ENCODE measurements at regions of chr6 and their contacts with region 1.

Region 1: GRCh38 chr6:112043032-112044007 is 10.6 kb upstream of the CCN6 start:
- DNase-seq: peak; percentile 80 to 93 (median 88)
- H3K4me3 ChIP-seq: peak overlapping the region; percentile 45
- H3K27ac ChIP-seq: peak overlapping the region; percentile 51 to 68
- H3K4me1 ChIP-seq: no peaks in the 10 kb centered on the region
- H3K27me3 ChIP-seq: no peaks in the 10 kb centered on the region
- CTCF ChIP-seq: peak; percentile 86 to 95 (median 88)
- EP300 ChIP-seq: no peak
- POLR2A ChIP-seq: no peak

Region 2: DNA sequence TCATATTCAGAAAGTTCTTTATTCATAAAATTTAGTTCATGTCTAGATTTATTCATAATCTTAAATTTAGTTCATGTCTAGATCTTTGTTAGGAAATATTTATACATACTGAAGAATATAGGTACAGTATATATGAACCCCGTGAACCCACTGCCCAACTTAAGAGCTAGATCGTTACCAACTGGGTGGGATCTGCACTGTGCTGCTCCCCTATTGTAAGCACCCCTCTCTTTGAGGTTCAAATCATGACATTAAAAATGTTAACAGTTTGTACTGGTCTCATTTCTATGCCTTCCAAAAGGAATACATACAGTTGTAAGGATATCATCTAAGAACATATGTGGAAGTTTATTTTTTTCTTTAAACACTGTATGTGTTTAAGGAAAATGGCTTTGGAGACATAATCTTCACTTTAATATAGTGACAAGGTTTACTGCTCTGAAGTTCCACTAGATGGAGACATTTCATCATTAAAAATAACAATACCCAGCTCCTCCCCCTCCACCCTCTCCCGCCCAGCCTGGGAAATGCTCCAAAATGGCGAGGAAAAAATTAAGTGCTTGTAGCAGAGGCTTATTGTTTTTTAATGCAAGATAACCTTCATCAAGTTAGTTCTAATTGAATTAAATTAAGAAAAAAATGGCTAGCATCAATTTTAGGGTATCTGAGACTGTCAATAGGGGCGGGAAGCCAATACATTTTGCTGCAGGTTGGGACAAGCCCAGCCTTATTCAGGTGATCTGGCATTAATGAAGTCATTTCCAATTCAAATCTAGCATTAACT is 333.5 kb before region 1 on chr6:
- intact Hi-C with region 1: loop called (anchors 2 to 10 kb)
- DNase-seq: peak; percentile 69 to 85 (median 76)
- H3K4me3 ChIP-seq: no peak overlapping the region
- H3K27ac ChIP-seq: peak overlapping the region in 1 of 2 donors; percentile 60
- H3K4me1 ChIP-seq: peaks cover 10% of the 10 kb centered on the region
- H3K27me3 ChIP-seq: no peaks in the 10 kb centered on the region
- CTCF ChIP-seq: peak; percentile 51 to 90 (median 69)
- EP300 ChIP-seq: no peak
- POLR2A ChIP-seq: no peak

Region 3: DNA sequence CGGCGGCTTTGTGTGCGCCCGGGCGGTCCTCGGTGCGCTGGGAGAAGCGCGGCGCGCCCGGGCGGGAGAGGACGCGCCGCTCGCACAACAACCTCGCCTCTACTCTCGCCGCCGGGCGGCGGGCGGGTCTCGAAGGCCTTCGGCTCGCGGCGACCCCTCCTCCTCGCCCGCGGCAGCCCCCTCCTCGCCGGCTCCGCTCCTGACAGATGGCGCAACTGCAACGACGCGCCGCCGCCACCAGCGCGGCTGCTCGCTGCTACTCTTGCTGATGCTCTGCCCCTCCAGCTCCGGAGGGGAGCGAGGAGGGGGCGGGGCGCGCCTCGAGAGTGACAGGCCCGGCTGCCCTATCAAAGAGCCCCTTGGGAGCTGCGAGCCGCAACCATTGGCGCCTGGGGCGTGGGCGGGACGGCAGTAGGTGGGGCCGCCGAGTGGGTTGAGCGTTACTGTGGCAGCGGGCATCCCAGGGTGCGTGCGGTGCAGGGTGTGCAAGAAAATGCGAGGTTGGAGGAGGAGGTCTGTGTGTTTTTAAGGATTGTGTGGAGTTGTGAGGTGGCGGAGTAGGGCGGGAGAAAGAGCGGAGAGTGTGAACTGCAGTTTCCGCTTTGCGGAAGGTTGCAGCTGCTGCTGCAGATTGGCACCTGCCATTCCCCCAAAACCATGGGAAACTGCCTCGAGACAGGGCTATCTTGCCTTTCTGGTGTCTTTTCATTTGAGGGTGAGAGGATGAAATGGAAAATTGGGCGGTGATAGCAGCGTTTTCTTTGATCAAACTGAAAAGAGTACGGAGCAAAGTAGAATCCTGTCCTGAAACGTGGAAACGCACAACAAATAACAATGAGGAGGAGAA is 169.9 kb before region 1 on chr6 and contains the start of gene FYN:
- intact Hi-C with region 1: loop called in 1 of 4 experiments (anchors 10 kb)
- DNase-seq: peak; percentile 97 to 99 (median 98)
- H3K4me3 ChIP-seq: peak within 1 kb of the TSS; percentile 48
- H3K27ac ChIP-seq: peak within 1 kb of the TSS; percentile 62 to 79
- H3K4me1 ChIP-seq: peaks cover 4% of the 10 kb centered on the region
- H3K27me3 ChIP-seq: no peaks in the 10 kb centered on the region
- CTCF ChIP-seq: peak in 2 of 3 donors; percentile 76 to 78
- EP300 ChIP-seq: no peak
- POLR2A ChIP-seq: peak; percentile 92
- total RNA-seq, gene FYN: 54.8 to 116 (median 72.7) TPM

Region 4: GRCh38 chr6:111997078-111997852 is 46.1 kb before region 1 on chr6:
- intact Hi-C with region 1: loop called in 1 of 4 experiments (anchors 5 kb)
- DNase-seq: peak; percentile 79 to 85 (median 83)
- H3K4me3 ChIP-seq: no peak overlapping the region
- H3K27ac ChIP-seq: peak overlapping the region in 1 of 2 donors; percentile 11
- H3K4me1 ChIP-seq: no peaks in the 10 kb centered on the region
- H3K27me3 ChIP-seq: no peaks in the 10 kb centered on the region
- CTCF ChIP-seq: peak; percentile 78 to 94 (median 85)
- EP300 ChIP-seq: no peak
- POLR2A ChIP-seq: no peak

Measured in ovary (tissue), 10 donors.